ENCODE measurements at regions of chr10 and their contacts with region 1.

Region 1: DNA sequence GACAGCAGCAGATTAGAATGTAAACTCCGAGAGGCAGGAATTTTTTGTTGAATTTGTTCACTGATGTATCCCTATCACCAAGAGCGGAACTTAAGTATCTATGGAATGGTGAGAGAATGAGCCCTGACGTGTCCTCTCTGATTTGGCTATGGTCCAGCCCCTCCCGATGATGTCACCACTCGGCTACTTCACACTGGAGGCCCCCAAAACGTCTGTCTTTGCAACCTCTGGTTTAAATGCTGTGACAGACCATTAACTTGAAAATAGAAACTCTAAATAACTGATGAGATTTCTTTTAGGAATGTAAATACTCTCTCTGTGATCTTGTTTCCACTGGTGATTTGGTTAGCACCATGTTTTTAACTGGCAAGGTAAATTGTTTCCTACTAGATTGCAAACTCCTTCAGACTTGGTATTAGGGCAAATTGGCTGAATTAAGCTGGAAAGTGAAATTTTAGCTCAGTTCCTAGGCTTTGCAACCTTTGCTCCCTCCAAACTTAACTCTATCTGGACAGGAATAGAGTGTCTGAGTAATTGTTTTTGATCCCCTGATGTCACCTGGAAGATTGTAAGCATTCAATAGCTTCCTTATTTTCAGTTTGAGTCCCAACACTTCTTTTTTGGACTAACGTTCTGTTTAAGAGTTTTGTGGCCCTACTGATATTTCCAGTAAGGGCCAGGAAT is 19.1 kb downstream of the SLC16A12 start:
- DNase-seq: no peak
- ATAC-seq: peak; percentile 60

Region 2: DNA sequence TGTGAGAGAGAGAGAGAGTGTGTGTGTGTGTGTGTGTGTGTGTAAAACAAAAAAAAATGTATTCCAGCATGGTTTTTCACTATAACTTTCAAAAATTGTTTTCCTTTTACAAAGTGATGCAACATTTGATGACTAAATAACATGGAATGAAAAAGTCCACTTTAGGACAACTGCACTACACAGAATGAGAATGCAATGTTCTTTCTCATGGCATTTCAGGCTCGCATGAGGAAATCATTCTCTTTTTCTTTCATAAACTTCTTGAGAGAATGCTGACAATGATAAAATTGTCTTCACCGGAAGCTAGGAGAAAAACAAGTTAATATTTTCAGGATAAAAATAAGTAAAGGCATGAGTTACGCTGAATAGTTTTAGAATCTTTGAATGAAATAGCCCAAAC is 34.6 kb before region 1 on chr10:
- intact Hi-C with region 1: loop called (anchors 5 kb)
- DNase-seq: no peak
- ATAC-seq: peak; percentile 58